ENCODE measurements at regions of chr7 and their contacts with region 1.

Region 1: GRCh38 chr7:65221683-65222082 is 152.0 kb upstream of the ZNF92 start:
- DNase-seq: no peak
- H3K4me3 ChIP-seq: no peak overlapping the region
- H3K27ac ChIP-seq: no peak overlapping the region
- H3K4me1 ChIP-seq: no peaks in the 10 kb centered on the region
- H3K27me3 ChIP-seq: no peaks in the 10 kb centered on the region
- CTCF ChIP-seq: no peak

Region 2: GRCh38 chr7:66609176-66609575 is 1387.5 kb after region 1 on chr7:
- CTCF ChIA-PET with region 1: interaction called, 10 read pairs
- POLR2A ChIA-PET with region 1: no interaction called
- intact Hi-C with region 1: no loop called
- DNase-seq: no peak
- H3K4me3 ChIP-seq: no peak overlapping the region
- H3K27ac ChIP-seq: no peak overlapping the region
- H3K4me1 ChIP-seq: no peaks in the 10 kb centered on the region
- H3K27me3 ChIP-seq: no peaks in the 10 kb centered on the region
- CTCF ChIP-seq: no peak